IMR-90 (cell line): ENCODE measurements at regions of chr14 and their contacts with region 1.

Region 1: GRCh38 chr14:35814371-35815005 is 5.4 kb upstream of the RALGAPA1 start:
- DNase-seq: peak; percentile 40
- ATAC-seq: peak; percentile 89
- H3K4me3 ChIP-seq: no peak overlapping the region
- H3K27ac ChIP-seq: no peak overlapping the region
- H3K4me1 ChIP-seq: no peaks in the 10 kb centered on the region
- H3K27me3 ChIP-seq: no peaks in the 10 kb centered on the region
- CTCF ChIP-seq: peak; percentile 64
- POLR2A ChIP-seq: no peak
- RAD21 ChIP-seq: peak; percentile 33; the same call in 1 of the 2 replicates

Region 2: GRCh38 chr14:35438910-35439713 is 375.4 kb before region 1 on chr14:
- CTCF ChIA-PET with region 1: no interaction called
- POLR2A ChIA-PET with region 1: interaction called, 3 read pairs
- dilution Hi-C with region 1: no loop called
- in situ Hi-C with region 1: no loop called
- intact Hi-C with region 1: loop called (anchors 5 kb)
- DNase-seq: no peak
- ATAC-seq: peak; percentile 40; the same call in 1 of the 2 replicates
- H3K4me3 ChIP-seq: no peak overlapping the region
- H3K27ac ChIP-seq: no peak overlapping the region
- H3K4me1 ChIP-seq: no peaks in the 10 kb centered on the region
- H3K27me3 ChIP-seq: no peaks in the 10 kb centered on the region; the same call in 1 of the 2 replicates
- CTCF ChIP-seq: peak; percentile 50
- POLR2A ChIP-seq: no peak
- RAD21 ChIP-seq: peak; percentile 37; the same call in 1 of the 2 replicates

Region 3: GRCh38 chr14:35533357-35534207 is 280.9 kb before region 1 on chr14 and contains the start of gene INSM2:
- CTCF ChIA-PET with region 1: no interaction called
- POLR2A ChIA-PET with region 1: no interaction called
- dilution Hi-C with region 1: no loop called
- in situ Hi-C with region 1: no loop called
- intact Hi-C with region 1: loop called (anchors 2 kb)
- DNase-seq: peak; percentile 34
- ATAC-seq: peak; percentile 93
- H3K4me3 ChIP-seq: peak within 1 kb of the TSS; percentile 49
- H3K27ac ChIP-seq: no peak within 1 kb of the TSS
- H3K4me1 ChIP-seq: peaks cover 2% of the 10 kb centered on the region; the same call in 1 of the 2 replicates
- H3K27me3 ChIP-seq: peaks cover 38% of the 10 kb centered on the region
- CTCF ChIP-seq: no peak
- POLR2A ChIP-seq: no peak
- RAD21 ChIP-seq: no peak
- total RNA-seq, gene INSM2: not detected in 2 replicates

Region 4: GRCh38 chr14:35890308-35890707 is 75.8 kb after region 1 on chr14:
- CTCF ChIA-PET with region 1: no interaction called
- POLR2A ChIA-PET with region 1: no interaction called
- dilution Hi-C with region 1: no loop called
- in situ Hi-C with region 1: no loop called
- intact Hi-C with region 1: no loop called
- DNase-seq: no peak
- ATAC-seq: no peak
- H3K4me3 ChIP-seq: no peak overlapping the region
- H3K27ac ChIP-seq: no peak overlapping the region
- H3K4me1 ChIP-seq: no peaks in the 10 kb centered on the region
- H3K27me3 ChIP-seq: no peaks in the 10 kb centered on the region; the same call in 1 of the 2 replicates
- CTCF ChIP-seq: no peak
- POLR2A ChIP-seq: no peak
- RAD21 ChIP-seq: no peak